CD4-positive, alpha-beta memory T cell (primary cell): ENCODE measurements at regions of chr4 and their contacts with region 1.

Region 1: DNA sequence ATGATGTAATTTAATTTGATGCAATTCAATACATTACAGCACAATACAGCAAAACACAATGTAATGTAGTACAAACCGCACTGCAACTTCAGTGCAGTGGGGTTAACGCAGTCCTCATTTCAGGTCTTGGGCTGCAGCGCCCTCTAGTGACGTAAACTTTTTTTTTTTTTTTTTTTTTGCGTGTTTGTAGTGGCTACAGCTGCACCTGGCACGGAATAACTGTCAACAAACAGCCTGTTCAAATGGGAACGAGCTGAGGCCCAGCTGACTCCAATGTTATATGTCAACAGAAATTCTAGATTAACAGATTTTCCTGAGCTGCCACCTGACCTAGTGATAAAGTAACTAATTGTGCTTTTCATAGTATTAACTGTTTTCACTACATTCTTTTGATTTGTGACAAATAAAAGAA is 33.5 kb upstream of the RASSF6 start:
- DNase-seq: peak in 4 of 5 donors; percentile 3 to 15 (median 13)
- H3K4me3 ChIP-seq: no peak overlapping the region
- H3K4me3 Mint-ChIP-seq: no peak overlapping the region
- H3K27ac ChIP-seq: no peak overlapping the region
- H3K27ac Mint-ChIP-seq: no peak overlapping the region
- H3K4me1 ChIP-seq: no peaks in the 10 kb centered on the region
- H3K4me1 Mint-ChIP-seq: no peaks in the 10 kb centered on the region
- H3K27me3 ChIP-seq: no peaks in the 10 kb centered on the region
- H3K27me3 Mint-ChIP-seq: peaks cover 2 to 4% of the 10 kb centered on the region in 2 donors

Region 2: DNA sequence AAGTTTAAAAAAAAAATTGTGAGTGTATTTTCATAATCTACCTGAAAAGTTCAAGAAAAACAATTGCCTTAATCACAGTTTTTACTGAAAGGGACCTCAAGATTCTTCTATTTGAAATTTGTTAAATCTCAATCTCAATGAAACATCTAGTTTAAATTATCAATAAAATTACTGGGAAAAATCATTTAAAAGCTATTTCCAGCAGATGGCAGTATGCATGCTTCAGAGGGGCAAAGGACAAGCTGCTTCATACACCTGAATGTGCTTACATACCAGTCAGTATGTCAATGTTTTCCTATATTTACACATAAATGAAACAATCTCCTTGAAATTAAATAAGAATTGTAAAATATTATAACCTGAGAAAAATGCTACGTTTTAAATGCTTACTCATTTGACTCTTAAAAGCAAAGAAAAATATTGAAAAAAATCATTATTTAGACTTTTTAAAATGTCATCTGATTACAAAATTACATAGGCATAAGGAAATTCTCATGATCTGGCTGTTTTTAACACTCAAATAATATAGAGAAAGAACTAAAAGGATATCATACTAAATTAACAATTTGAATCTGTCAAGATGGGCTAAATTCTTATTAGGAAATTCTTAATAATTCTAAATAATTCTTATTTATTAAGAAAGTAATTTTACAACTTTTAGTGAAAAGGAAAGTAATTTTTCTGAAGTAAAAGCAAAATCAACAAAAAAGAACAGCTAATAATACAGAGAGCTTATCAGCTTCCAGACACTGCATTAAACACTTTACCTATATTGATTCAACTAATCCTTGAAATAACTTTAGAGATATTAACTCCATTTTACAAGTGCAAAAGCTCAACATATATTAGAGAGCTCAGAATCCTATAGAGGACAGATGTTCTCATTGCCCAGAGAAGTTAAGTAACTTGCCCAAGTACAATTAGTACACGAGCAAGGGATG is 1326.7 kb before region 1 on chr4:
- CTCF ChIA-PET with region 1: no interaction called
- POLR2A ChIA-PET with region 1: no interaction called
- intact Hi-C with region 1: loop called (anchors 5 kb)
- DNase-seq: peak in 2 of 5 donors; percentile 12 to 14
- H3K4me3 ChIP-seq: no peak overlapping the region
- H3K4me3 Mint-ChIP-seq: no peak overlapping the region
- H3K27ac ChIP-seq: no peak overlapping the region
- H3K27ac Mint-ChIP-seq: no peak overlapping the region
- H3K4me1 ChIP-seq: no peaks in the 10 kb centered on the region
- H3K4me1 Mint-ChIP-seq: no peaks in the 10 kb centered on the region
- H3K27me3 ChIP-seq: peaks cover 2% of the 10 kb centered on the region
- H3K27me3 Mint-ChIP-seq: peaks cover 1 to 4% of the 10 kb centered on the region in 2 donors

Region 3: DNA sequence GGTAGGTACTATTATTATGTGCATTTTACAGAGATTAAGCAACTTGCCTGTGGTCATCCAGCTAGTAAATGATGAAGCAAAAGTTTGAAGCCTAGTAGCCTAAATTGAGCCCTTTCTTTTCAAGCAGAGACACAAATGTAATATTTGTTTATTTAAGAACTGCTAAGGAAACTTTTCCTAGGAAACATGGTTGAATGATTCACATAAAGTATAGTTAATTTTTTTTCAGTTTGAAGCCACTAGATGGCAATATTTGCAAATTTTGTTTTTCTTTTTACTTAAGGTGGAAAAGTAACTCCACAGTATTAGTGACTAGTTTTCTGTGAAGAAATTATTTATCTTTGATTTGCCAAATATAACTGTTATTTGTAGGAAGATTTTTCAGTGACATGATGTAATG is 342.3 kb before region 1 on chr4:
- CTCF ChIA-PET with region 1: no interaction called
- POLR2A ChIA-PET with region 1: no interaction called
- intact Hi-C with region 1: loop called (anchors 5 kb)
- DNase-seq: peak in 1 of 5 donors; percentile 0
- H3K4me3 ChIP-seq: no peak overlapping the region
- H3K4me3 Mint-ChIP-seq: no peak overlapping the region
- H3K27ac ChIP-seq: no peak overlapping the region
- H3K27ac Mint-ChIP-seq: no peak overlapping the region
- H3K4me1 ChIP-seq: no peaks in the 10 kb centered on the region
- H3K4me1 Mint-ChIP-seq: no peaks in the 10 kb centered on the region
- H3K27me3 ChIP-seq: no peaks in the 10 kb centered on the region
- H3K27me3 Mint-ChIP-seq: peaks cover 0 to 1% of the 10 kb centered on the region in 2 donors

Region 4: DNA sequence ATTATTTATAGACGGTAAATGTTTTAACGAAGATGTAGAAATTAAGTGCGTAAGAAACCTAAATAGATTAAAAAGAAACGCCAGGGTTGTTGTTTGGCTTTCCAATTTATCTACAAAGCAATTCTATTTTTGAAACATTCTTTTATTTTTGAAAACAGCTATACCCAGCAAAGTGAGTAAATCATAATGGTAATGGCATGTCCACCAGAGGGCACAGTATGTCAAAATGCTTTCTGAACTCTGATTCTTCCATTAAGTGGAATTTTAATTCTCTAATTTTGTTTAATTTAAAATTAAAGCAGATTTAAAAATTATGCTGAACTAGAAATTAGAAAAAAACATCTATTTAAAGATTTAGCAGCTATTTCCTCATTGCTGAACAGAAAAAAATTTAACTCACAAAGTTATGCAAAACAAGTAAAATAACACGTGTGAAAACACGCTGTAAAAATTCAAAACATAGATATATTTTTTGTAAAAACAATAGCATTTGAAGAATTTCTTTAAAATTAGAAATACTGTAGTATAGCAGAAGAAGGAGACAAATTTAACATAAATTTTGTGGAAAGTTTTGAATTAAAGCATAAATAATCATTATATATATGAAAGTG is 60.0 kb before region 1 on chr4:
- CTCF ChIA-PET with region 1: interaction called, 17 read pairs
- POLR2A ChIA-PET with region 1: no interaction called
- intact Hi-C with region 1: loop called (anchors 1 kb)
- DNase-seq: peak in 2 of 5 donors; percentile 9 to 16
- H3K4me3 ChIP-seq: no peak overlapping the region
- H3K4me3 Mint-ChIP-seq: no peak overlapping the region
- H3K27ac ChIP-seq: no peak overlapping the region
- H3K27ac Mint-ChIP-seq: no peak overlapping the region
- H3K4me1 ChIP-seq: no peaks in the 10 kb centered on the region
- H3K4me1 Mint-ChIP-seq: no peaks in the 10 kb centered on the region
- H3K27me3 ChIP-seq: no peaks in the 10 kb centered on the region
- H3K27me3 Mint-ChIP-seq: peaks cover 0 to 1% of the 10 kb centered on the region in 2 donors